ENCODE measurements at regions of chr5 and their contacts with region 1.

Region 1: GRCh38 chr5:156402387-156402921 is 75.5 kb downstream of the SGCD start:
- DNase-seq: peak; percentile 87
- ATAC-seq: peak; percentile 96
- H3K4me3 ChIP-seq: peak overlapping the region; percentile 24; the same call in 1 of the 2 replicates
- H3K27ac ChIP-seq: no peak overlapping the region; the same call in 1 of the 2 replicates
- H3K4me1 ChIP-seq: peaks cover 15% of the 10 kb centered on the region
- H3K27me3 ChIP-seq: no peaks in the 10 kb centered on the region
- CTCF ChIP-seq: no peak
- EP300 ChIP-seq: peak; percentile 26 to 56; a peak in 1 of 4 replicates
- POLR2A ChIP-seq: no peak
- RAD21 ChIP-seq: 0 out of 2 replicates have a peak, but pooled peaks have one; percentile 27

Region 2: GRCh38 chr5:156375895-156376495 is 26.5 kb before region 1 on chr5:
- CTCF ChIA-PET with region 1: interaction called, 3 read pairs
- POLR2A ChIA-PET with region 1: no interaction called
- RAD21 ChIA-PET with region 1: interaction called, 4 read pairs
- SMC1A ChIA-PET with region 1: interaction called, 5 read pairs
- in situ Hi-C with region 1: no loop called
- intact Hi-C with region 1: loop called (anchors 1 kb)
- DNase-seq: peak; percentile 28
- ATAC-seq: peak; percentile 73
- H3K4me3 ChIP-seq: no peak overlapping the region
- H3K27ac ChIP-seq: 0 out of 2 replicates have a peak overlapping the region, but pooled peaks have one; percentile 25
- H3K4me1 ChIP-seq: peaks cover 21% of the 10 kb centered on the region
- H3K27me3 ChIP-seq: no peaks in the 10 kb centered on the region
- CTCF ChIP-seq: no peak
- EP300 ChIP-seq: no peak
- POLR2A ChIP-seq: no peak
- RAD21 ChIP-seq: no peak

Measured in GM12878 (cell line).